Naive thymus-derived CD4-positive, alpha-beta T cell (primary cell): ENCODE measurements at regions of chr3 and their contacts with region 1.

Region 1: DNA sequence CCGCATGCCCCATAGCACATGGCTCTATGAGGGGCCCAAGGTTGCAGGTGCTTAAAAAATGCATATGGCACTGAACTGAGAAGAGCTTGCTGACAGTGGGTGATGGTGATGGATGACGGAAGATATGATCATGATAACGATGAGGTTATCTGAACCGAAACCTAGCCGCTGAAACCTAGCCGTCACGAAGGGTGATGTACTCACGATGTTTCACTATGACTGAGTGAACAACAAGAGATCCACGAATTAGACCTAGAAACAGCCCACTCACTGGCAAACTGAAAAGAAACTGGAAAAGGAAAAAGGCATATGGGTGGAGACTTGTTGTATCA is 57.6 kb upstream of the BCL6 start:
- DNase-seq: peak in 1 of 9 donors; percentile 66
- ATAC-seq: peak; percentile 56
- H3K4me3 ChIP-seq: no peak overlapping the region
- H3K4me3 Mint-ChIP-seq: peak overlapping the region in 6 of 10 donors; percentile 14 to 69 (median 34)
- H3K27ac ChIP-seq: no peak overlapping the region
- H3K27ac Mint-ChIP-seq: peak overlapping the region in 1 of 9 donors; percentile 90
- H3K4me1 ChIP-seq: peaks cover 22 to 47% of the 10 kb centered on the region in 2 donors
- H3K4me1 Mint-ChIP-seq: peaks cover 23 to 93% (median 44%) of the 10 kb centered on the region in 7 donors
- H3K27me3 ChIP-seq: no peaks in the 10 kb centered on the region
- H3K27me3 Mint-ChIP-seq: no peaks in the 10 kb centered on the region

Region 2: GRCh38 chr3:186277268-186277909 is 1525.5 kb before region 1 on chr3:
- CTCF ChIA-PET with region 1: no interaction called
- POLR2A ChIA-PET with region 1: no interaction called
- intact Hi-C with region 1: no loop called
- DNase-seq: no peak
- ATAC-seq: no peak
- H3K4me3 ChIP-seq: no peak overlapping the region
- H3K4me3 Mint-ChIP-seq: no peak overlapping the region
- H3K27ac ChIP-seq: no peak overlapping the region
- H3K27ac Mint-ChIP-seq: no peak overlapping the region
- H3K4me1 ChIP-seq: no peaks in the 10 kb centered on the region
- H3K4me1 Mint-ChIP-seq: no peaks in the 10 kb centered on the region
- H3K27me3 ChIP-seq: no peaks in the 10 kb centered on the region
- H3K27me3 Mint-ChIP-seq: peaks cover 0 to 11% (median 6%) of the 10 kb centered on the region in 5 donors

Region 3: GRCh38 chr3:187777331-187777941 is 25.5 kb before region 1 on chr3:
- CTCF ChIA-PET with region 1: no interaction called
- POLR2A ChIA-PET with region 1: no interaction called
- intact Hi-C with region 1: loop called in 1 of 2 experiments (anchors 1 kb)
- DNase-seq: peak in 5 of 9 donors; percentile 14 to 31 (median 18)
- ATAC-seq: peak; percentile 86
- H3K4me3 ChIP-seq: peak overlapping the region; percentile 2
- H3K4me3 Mint-ChIP-seq: peak overlapping the region in 5 of 10 donors; percentile 1 to 64 (median 37)
- H3K27ac ChIP-seq: no peak overlapping the region
- H3K27ac Mint-ChIP-seq: peak overlapping the region in 7 of 9 donors; percentile 6 to 88 (median 56)
- H3K4me1 ChIP-seq: peaks cover 10 to 16% of the 10 kb centered on the region in 2 donors
- H3K4me1 Mint-ChIP-seq: peaks cover 14 to 63% (median 23%) of the 10 kb centered on the region in 7 donors
- H3K27me3 ChIP-seq: no peaks in the 10 kb centered on the region
- H3K27me3 Mint-ChIP-seq: no peaks in the 10 kb centered on the region

Region 4: GRCh38 chr3:187822402-187822801 is 19.5 kb after region 1 on chr3:
- CTCF ChIA-PET with region 1: no interaction called
- POLR2A ChIA-PET with region 1: no interaction called
- intact Hi-C with region 1: loop called in 1 of 2 experiments (anchors 2 kb)
- DNase-seq: no peak
- ATAC-seq: peak; percentile 59
- H3K4me3 ChIP-seq: no peak overlapping the region
- H3K4me3 Mint-ChIP-seq: peak overlapping the region in 1 of 10 donors; percentile 15
- H3K27ac ChIP-seq: no peak overlapping the region
- H3K27ac Mint-ChIP-seq: peak overlapping the region in 3 of 9 donors; percentile 34 to 82 (median 62)
- H3K4me1 ChIP-seq: peaks cover 4 to 14% of the 10 kb centered on the region in 2 donors
- H3K4me1 Mint-ChIP-seq: peaks cover 8 to 25% (median 10%) of the 10 kb centered on the region in 7 donors
- H3K27me3 ChIP-seq: no peaks in the 10 kb centered on the region
- H3K27me3 Mint-ChIP-seq: no peaks in the 10 kb centered on the region

Region 5: DNA sequence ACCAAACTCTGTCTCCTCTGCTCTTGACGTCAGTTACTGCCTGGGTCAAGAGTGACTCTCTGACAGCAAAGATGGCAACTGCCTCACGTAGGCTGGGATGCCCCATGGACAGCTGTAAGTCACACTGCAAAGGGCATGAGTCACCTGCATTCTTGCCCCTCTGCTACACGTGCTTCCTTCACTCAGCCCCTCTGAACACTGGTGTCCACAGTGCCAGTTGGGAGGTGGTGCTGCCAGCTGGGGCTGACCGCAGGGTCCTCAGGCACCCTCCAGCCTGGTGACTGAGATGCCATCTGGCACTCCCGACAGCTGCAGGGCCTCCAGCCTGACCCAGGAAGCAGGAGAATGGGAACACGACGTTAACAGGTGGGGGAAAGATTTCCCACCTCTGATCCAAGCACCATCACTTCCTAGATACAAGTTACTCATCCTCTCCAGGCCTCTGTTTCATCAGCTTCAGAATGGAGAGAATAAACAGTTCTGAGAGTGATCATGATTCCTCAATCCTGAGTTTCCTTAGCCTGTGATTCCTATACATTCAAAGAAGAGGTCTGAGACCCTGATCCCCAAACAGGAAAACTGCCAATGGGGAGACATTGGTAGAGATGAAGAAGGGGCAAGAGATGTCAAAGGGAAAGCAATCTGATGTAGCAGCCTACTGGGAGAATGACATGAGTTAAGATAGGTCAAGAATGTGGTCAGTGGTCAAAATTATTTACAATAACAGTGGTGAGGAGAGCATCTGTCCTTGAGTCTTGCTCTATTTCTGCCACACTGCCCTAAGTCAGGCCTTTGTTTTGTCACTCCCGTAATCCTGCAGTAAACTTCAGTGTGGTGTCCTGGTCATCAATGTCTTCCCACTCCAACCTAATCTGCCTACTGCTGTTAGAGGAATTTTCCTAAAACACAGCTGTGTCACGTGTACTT is 28.5 kb after region 1 on chr3:
- CTCF ChIA-PET with region 1: no interaction called
- POLR2A ChIA-PET with region 1: no interaction called
- intact Hi-C with region 1: loop called in 1 of 2 experiments (anchors 2 kb)
- DNase-seq: no peak
- ATAC-seq: no peak
- H3K4me3 ChIP-seq: no peak overlapping the region
- H3K4me3 Mint-ChIP-seq: no peak overlapping the region
- H3K27ac ChIP-seq: no peak overlapping the region
- H3K27ac Mint-ChIP-seq: no peak overlapping the region
- H3K4me1 ChIP-seq: peaks cover 0 to 7% of the 10 kb centered on the region in 2 donors
- H3K4me1 Mint-ChIP-seq: peaks cover 0 to 41% (median 4%) of the 10 kb centered on the region in 7 donors
- H3K27me3 ChIP-seq: no peaks in the 10 kb centered on the region
- H3K27me3 Mint-ChIP-seq: no peaks in the 10 kb centered on the region

Region 6: GRCh38 chr3:188000361-188000861 is 197.5 kb after region 1 on chr3:
- CTCF ChIA-PET with region 1: no interaction called
- POLR2A ChIA-PET with region 1: no interaction called
- intact Hi-C with region 1: loop called in 1 of 2 experiments (anchors 2 kb)
- DNase-seq: no peak
- ATAC-seq: no peak
- H3K4me3 ChIP-seq: peak overlapping the region; percentile 13
- H3K4me3 Mint-ChIP-seq: peak overlapping the region; percentile 42 to 83 (median 77)
- H3K27ac ChIP-seq: no peak overlapping the region
- H3K27ac Mint-ChIP-seq: peak overlapping the region; percentile 27 to 94 (median 85)
- H3K4me1 ChIP-seq: peaks cover 26 to 37% of the 10 kb centered on the region in 2 donors
- H3K4me1 Mint-ChIP-seq: peaks cover 41 to 75% (median 64%) of the 10 kb centered on the region in 7 donors
- H3K27me3 ChIP-seq: no peaks in the 10 kb centered on the region
- H3K27me3 Mint-ChIP-seq: no peaks in the 10 kb centered on the region

Region 7: GRCh38 chr3:188148318-188148717 is 345.4 kb after region 1 on chr3:
- CTCF ChIA-PET with region 1: no interaction called
- POLR2A ChIA-PET with region 1: no interaction called
- intact Hi-C with region 1: no loop called
- DNase-seq: no peak
- ATAC-seq: no peak
- H3K4me3 ChIP-seq: no peak overlapping the region
- H3K4me3 Mint-ChIP-seq: peak overlapping the region in 2 of 10 donors; percentile 1 to 9
- H3K27ac ChIP-seq: no peak overlapping the region
- H3K27ac Mint-ChIP-seq: peak overlapping the region in 6 of 9 donors; percentile 7 to 57 (median 26)
- H3K4me1 ChIP-seq: peaks cover 0 to 11% of the 10 kb centered on the region in 2 donors
- H3K4me1 Mint-ChIP-seq: peaks cover 13 to 35% (median 28%) of the 10 kb centered on the region in 7 donors
- H3K27me3 ChIP-seq: no peaks in the 10 kb centered on the region
- H3K27me3 Mint-ChIP-seq: no peaks in the 10 kb centered on the region

Region 8: DNA sequence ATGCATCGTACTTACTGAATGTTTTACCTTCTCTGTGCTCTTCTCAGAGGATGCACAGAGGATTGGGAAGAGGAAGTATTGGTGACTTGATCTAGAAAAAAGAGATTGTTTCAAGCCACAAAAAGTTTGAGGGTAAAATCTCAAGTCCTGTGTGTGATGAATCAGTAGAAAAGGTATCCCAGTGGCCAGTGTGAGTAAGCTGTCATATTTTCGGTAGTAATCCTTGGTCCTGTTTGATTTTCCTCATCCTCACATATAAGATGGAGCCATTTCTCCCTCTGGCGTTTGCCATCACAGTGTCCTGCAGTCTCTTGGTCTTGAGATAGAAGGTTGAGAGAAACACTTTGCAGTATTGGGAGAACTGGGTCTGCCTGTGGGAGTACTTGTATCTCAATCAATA is 517.9 kb after region 1 on chr3:
- CTCF ChIA-PET with region 1: no interaction called
- POLR2A ChIA-PET with region 1: no interaction called
- intact Hi-C with region 1: loop called in 1 of 2 experiments (anchors 5 kb)
- DNase-seq: no peak
- ATAC-seq: no peak
- H3K4me3 ChIP-seq: no peak overlapping the region
- H3K4me3 Mint-ChIP-seq: peak overlapping the region in 1 of 10 donors; percentile 37
- H3K27ac ChIP-seq: no peak overlapping the region
- H3K27ac Mint-ChIP-seq: peak overlapping the region in 2 of 9 donors; percentile 11 to 59
- H3K4me1 ChIP-seq: peaks cover 19 to 26% of the 10 kb centered on the region in 2 donors
- H3K4me1 Mint-ChIP-seq: peaks cover 34 to 67% (median 55%) of the 10 kb centered on the region in 7 donors
- H3K27me3 ChIP-seq: no peaks in the 10 kb centered on the region
- H3K27me3 Mint-ChIP-seq: peaks cover 0 to 6% (median 0%) of the 10 kb centered on the region in 5 donors

Region 9: DNA sequence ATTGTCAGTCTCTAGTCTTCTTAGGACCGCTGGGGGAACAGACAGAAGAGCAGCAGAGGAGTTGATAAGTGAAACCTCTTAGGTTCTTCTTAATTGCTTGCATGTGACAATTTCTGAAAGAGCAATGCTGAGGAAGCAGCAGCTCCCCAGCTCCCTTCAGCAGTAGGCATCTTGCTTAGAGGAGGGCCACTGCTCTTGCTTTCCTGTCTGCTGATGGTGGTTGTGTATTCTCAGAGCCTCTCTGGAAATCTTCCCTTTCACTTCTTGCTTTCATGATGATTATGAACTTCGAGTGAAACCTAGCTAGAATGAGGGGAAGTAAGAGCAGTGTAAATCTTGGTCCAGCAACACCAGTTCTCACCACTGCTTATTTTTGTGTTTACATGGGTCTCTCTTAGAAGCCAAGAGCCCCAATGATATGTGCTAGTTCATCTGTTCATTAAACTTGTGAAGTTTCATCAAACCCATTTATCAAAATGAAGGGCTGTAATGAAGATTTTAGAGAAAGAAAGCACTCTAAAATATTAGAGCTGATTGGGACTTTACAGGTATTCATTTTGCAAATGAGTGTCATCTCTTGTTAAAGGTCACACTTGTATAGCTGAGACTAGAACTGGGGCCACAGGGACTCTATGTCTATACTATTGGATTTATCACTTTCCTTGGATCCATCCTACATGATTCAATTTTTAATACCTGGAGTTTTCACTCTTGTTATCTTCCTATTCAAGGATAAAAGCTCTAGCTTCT is 597.8 kb after region 1 on chr3:
- CTCF ChIA-PET with region 1: no interaction called
- POLR2A ChIA-PET with region 1: no interaction called
- intact Hi-C with region 1: loop called in 1 of 2 experiments (anchors 5 kb)
- DNase-seq: no peak
- ATAC-seq: peak; percentile 75
- H3K4me3 ChIP-seq: no peak overlapping the region
- H3K4me3 Mint-ChIP-seq: peak overlapping the region in 1 of 10 donors; percentile 42
- H3K27ac ChIP-seq: no peak overlapping the region
- H3K27ac Mint-ChIP-seq: peak overlapping the region in 2 of 9 donors; percentile 58 to 69
- H3K4me1 ChIP-seq: peaks cover 0 to 4% of the 10 kb centered on the region in 2 donors
- H3K4me1 Mint-ChIP-seq: peaks cover 28 to 63% (median 49%) of the 10 kb centered on the region in 7 donors
- H3K27me3 ChIP-seq: no peaks in the 10 kb centered on the region
- H3K27me3 Mint-ChIP-seq: no peaks in the 10 kb centered on the region

Region 10: GRCh38 chr3:188554404-188554803 is 751.5 kb after region 1 on chr3:
- CTCF ChIA-PET with region 1: no interaction called
- POLR2A ChIA-PET with region 1: no interaction called
- intact Hi-C with region 1: no loop called
- DNase-seq: no peak
- ATAC-seq: no peak
- H3K4me3 ChIP-seq: no peak overlapping the region
- H3K4me3 Mint-ChIP-seq: no peak overlapping the region
- H3K27ac ChIP-seq: no peak overlapping the region
- H3K27ac Mint-ChIP-seq: no peak overlapping the region
- H3K4me1 ChIP-seq: peaks cover 0 to 33% of the 10 kb centered on the region in 2 donors
- H3K4me1 Mint-ChIP-seq: peaks cover 7 to 19% (median 12%) of the 10 kb centered on the region in 7 donors
- H3K27me3 ChIP-seq: no peaks in the 10 kb centered on the region
- H3K27me3 Mint-ChIP-seq: no peaks in the 10 kb centered on the region